ENCODE measurements at regions of chr1 and their contacts with region 1.

Region 1: DNA sequence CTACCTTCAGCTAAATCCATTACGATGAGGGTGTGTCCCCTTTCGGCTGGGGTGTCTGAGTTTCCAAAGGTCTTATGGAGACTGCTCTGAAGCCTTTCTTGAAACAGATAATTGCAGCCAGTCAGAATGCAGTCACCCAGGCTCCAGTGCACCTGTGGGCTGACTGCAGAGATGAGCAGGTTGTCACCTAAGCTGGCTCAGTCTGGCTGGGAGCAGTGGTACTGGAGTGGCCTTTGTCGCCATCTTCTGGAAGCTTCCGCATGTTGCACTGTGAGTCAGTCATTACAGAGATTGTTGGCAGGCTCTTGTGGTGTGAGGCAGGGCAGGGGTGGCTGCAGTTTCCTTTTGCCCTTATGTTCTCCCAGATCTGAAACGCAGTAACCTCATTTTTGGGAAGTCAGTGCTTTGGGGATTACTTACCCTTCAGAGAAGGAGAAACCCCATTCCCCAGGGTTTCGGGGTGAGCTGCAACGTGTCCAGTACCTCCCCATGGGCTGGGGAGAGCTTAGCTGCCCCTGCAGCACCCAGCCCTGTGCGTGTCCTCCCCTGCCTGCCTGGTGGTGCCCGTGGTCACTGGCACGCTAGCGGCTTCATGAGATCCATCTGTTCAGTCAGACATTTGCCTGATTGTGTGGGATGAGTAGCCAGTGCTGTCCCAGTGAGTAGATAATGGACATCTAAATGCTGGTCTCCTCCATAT is 48.0 kb downstream of the SMYD2 start:
- DNase-seq: peak; percentile 44
- H3K4me3 ChIP-seq: no peak overlapping the region
- H3K27ac ChIP-seq: no peak overlapping the region
- H3K27me3 ChIP-seq: no peaks in the 10 kb centered on the region
- CTCF ChIP-seq: peak; percentile 92

Region 2: DNA sequence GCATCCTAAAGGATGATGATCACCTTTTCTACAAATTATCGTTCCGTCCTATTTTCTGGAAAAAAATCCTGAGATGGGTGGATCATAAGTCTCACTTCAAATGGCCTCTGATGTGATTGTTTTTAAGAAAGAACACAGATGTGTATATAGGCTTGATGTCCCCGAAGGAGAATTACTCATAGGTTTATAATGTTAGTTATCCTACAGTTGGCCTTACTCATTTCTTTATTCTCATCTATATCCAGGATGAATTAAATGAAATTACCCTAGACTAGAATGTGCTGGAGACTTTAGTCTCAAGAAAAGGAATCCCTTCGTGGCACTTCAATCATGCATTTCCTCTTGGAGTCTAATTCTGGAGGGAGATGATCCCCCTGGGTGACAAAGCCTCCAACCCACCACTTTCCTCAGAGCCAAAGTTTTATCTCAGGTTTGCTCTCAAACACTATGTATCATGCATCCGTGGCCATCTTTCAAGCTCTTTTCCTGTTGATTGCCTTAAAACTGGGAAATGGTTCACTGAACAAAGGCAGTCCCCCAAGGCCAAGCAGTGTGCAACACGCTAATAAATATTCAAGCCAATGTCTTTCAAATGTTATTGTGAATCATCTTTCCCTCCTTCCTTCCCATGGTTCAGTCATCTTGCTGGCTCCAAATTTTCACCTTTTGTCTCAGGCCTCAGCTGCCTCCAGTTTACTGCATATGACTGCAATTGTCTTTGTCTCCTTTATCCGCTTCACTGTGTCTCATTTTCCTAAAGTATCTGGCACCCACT is 80.4 kb before region 1 on chr1:
- CTCF ChIA-PET with region 1: interaction called, 15 read pairs
- POLR2A ChIA-PET with region 1: no interaction called
- DNase-seq: no peak
- H3K4me3 ChIP-seq: no peak overlapping the region
- H3K27ac ChIP-seq: no peak overlapping the region
- H3K27me3 ChIP-seq: no peaks in the 10 kb centered on the region
- CTCF ChIP-seq: no peak

Region 3: DNA sequence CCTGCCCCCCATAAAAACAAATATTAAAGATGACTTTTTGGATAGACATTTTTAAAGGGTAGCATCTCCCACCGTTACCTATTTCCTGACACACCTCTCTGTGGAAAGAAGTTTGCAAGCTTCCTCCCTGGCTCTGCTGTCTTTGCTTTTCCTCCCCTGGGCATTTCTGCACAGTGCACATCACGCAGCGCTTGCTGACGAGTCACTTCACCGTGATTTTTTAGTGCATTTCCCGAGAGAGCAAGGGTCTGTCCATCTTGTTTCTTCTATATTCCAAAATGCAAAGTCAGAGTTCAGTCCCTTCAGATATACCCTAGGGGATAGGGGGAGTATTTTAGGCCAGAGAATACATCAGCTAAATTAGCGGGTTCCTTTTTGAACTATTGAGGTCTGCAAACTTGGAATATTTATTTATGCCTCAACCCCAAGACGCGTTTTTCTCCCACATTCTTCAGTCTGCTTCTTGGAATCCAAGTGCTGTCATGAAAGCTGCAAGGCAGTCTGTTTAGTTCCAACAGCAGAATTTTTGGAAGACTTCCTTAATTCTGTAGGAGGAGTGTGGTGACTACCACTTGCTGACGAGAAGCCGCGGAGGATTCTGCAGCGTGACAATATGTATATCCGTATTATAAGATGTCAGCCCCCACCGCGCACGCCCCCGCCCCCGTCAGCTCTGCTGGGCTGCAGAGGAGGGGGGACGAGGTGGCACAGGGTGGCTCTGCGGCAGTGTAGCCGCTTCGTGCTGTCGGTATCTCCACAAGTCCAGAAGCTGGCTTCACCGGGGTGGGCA is 25.6 kb before region 1 on chr1:
- CTCF ChIA-PET with region 1: interaction called, 17 read pairs
- POLR2A ChIA-PET with region 1: no interaction called
- DNase-seq: no peak
- H3K4me3 ChIP-seq: peak overlapping the region; percentile 41
- H3K27ac ChIP-seq: no peak overlapping the region
- H3K27me3 ChIP-seq: no peaks in the 10 kb centered on the region
- CTCF ChIP-seq: no peak

Region 4: GRCh38 chr1:214362188-214362882 is 33.4 kb after region 1 on chr1:
- CTCF ChIA-PET with region 1: interaction called, 13 read pairs
- POLR2A ChIA-PET with region 1: no interaction called
- DNase-seq: no peak
- H3K4me3 ChIP-seq: no peak overlapping the region
- H3K27ac ChIP-seq: no peak overlapping the region
- H3K27me3 ChIP-seq: no peaks in the 10 kb centered on the region
- CTCF ChIP-seq: no peak

Region 5: GRCh38 chr1:214566158-214567104 is 237.5 kb after region 1 on chr1:
- CTCF ChIA-PET with region 1: interaction called, 17 read pairs
- POLR2A ChIA-PET with region 1: no interaction called
- DNase-seq: no peak
- H3K4me3 ChIP-seq: no peak overlapping the region
- H3K27ac ChIP-seq: no peak overlapping the region
- H3K27me3 ChIP-seq: no peaks in the 10 kb centered on the region
- CTCF ChIP-seq: no peak

Region 6: GRCh38 chr1:214609692-214610091 is 280.8 kb after region 1 on chr1:
- CTCF ChIA-PET with region 1: interaction called, 23 read pairs
- POLR2A ChIA-PET with region 1: no interaction called
- DNase-seq: no peak
- H3K4me3 ChIP-seq: no peak overlapping the region
- H3K27ac ChIP-seq: no peak overlapping the region
- H3K27me3 ChIP-seq: no peaks in the 10 kb centered on the region
- CTCF ChIP-seq: no peak

Region 7: GRCh38 chr1:214637722-214638458 is 309.0 kb after region 1 on chr1:
- CTCF ChIA-PET with region 1: interaction called, 21 read pairs
- POLR2A ChIA-PET with region 1: no interaction called
- DNase-seq: peak; percentile 24
- H3K4me3 ChIP-seq: no peak overlapping the region
- H3K27ac ChIP-seq: no peak overlapping the region
- H3K27me3 ChIP-seq: no peaks in the 10 kb centered on the region
- CTCF ChIP-seq: peak; percentile 84

Region 8: GRCh38 chr1:214700365-214700764 is 371.4 kb after region 1 on chr1:
- CTCF ChIA-PET with region 1: no interaction called
- POLR2A ChIA-PET with region 1: no interaction called
- DNase-seq: no peak
- H3K4me3 ChIP-seq: no peak overlapping the region
- H3K27ac ChIP-seq: no peak overlapping the region
- H3K27me3 ChIP-seq: no peaks in the 10 kb centered on the region
- CTCF ChIP-seq: no peak

Measured in AG04450 (cell line).